ENCODE measurements at regions of chr17 and their contacts with region 1.

Region 1: DNA sequence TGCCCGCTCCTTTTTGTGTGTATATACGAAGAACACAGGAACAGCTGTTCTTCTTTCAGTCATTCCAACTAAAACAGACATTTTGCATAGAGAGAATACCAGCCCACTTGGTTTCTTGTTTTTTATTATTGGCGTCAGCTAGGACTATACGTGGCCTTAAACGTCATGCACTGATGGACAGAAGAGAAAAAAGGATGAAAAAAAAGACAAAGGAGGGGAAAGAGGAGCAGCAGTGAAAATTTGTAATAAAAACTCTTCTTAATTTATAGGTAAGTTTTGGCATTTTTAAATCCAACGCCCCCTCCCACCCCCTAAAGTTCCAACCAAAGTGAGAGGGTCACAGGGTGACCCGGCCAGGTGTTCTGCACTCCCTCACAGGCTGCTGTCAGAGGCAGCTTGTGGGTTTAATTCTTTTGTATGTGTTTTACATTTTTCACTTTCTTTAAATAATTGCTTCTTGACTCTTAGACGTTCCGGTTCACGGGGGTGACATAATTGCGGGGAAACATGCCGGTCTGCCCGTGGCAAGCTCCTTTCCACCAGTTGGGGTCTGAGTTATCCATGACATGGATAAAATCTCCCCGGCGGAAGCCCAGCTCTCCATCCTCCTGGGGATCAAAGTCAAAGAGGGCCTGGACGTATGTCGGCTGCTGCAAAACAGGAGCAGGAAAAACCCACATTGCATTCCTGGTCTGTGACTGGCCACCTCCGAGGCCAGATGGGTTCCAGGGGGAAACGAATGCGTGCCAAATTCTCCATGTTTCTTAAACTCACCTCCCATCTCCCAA is 30.9 kb upstream of the SLC25A19 start:
- DNase-seq: no peak
- H3K4me3 ChIP-seq: no peak overlapping the region
- H3K27ac ChIP-seq: no peak overlapping the region
- H3K4me1 ChIP-seq: peaks cover 0 to 5% (median 0%) of the 10 kb centered on the region in 4 donors
- H3K27me3 ChIP-seq: no peaks in the 10 kb centered on the region
- CTCF ChIP-seq: no peak

Region 2: DNA sequence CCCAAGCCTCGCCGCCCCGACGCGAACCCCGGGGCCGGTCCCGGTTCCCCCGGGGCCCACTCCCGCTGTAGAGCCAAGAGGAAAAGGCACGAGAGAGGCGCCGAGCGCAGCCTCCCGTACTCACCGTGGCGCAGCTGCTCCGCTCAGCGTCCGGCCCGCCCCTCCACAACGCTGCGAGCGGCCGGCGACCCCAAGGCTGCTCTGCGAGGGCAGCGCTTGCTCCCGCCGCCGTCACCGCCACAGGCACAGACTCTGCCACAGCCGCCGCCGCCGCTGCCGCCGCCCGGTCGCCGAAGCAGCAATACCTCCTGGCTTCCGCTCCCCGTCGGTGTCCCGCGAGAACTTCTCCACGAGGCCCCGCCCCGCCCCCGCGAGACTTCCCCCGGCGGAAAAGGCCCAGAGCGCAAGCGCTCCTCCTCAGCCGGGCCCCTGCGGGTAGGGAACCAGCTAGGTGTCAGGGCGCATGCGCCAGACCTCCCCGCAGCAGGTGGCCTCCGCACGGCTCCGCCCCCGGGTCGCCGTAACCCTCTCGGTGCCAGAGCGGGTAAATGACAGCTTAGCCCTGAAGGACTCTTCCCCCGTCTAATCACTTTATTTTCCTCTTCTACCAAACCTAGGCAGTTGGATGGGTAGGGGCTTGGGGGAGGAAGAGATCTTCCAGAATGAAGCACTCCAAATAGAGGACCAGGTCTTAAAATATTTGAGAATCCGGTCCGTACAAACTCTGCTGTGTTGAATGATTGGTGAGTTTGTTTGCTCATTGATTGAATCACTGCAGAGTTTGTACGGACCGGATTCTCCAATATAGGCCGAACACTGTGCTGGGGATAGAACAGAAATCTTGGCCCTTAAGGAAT is 85.5 kb after region 1 on chr17 and contains the start of gene GRB2:
- intact Hi-C with region 1: loop called (anchors 2 kb)
- DNase-seq: peak; percentile 97 to 99
- H3K4me3 ChIP-seq: peak within 1 kb of the TSS; percentile 73 to 100
- H3K27ac ChIP-seq: peak within 1 kb of the TSS; percentile 87 to 96
- H3K4me1 ChIP-seq: peaks cover 0 to 36% (median 26%) of the 10 kb centered on the region in 4 donors
- H3K27me3 ChIP-seq: no peaks in the 10 kb centered on the region
- CTCF ChIP-seq: peak in 1 of 2 experiments; percentile 8

Region 3: DNA sequence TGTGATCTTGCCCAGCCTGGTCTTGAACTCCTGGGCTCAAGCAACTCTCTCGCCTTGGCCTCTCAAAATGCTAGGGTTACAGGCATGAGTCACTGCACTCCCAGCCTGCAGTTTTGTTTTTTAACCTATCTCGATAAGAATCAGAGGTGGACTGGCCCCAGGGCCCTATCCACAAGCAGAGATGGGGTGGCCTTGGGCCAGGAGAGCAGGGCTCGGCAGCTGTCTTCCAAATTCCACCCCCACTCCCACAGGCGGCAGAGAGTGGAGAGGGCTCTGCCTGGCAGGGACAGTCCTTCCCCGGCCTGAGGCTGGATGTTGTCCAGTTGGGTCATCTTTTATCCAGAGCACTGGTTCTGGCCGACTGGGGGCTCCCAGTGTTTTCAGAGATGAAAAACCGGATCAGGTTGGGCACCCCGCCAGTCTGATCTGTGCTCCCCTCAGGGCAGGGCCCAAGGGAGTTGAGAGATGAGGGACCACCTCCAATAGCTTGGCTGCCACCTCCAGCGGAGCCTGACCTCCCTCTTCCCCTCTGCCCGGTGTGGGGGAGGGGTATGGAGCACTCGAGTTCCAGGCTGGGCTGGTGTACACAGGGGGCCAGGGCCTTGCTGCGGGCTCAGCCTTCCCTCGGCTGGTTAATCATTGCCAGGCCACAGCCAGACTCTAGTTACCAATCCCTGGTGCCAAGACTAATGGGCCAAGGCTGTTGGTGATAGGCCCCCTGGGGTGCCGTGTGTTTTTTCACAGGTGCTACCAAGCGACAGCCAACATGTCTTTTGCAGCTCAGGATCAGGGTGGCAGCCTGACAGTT is 237.2 kb after region 1 on chr17:
- intact Hi-C with region 1: no loop called
- DNase-seq: no peak
- H3K4me3 ChIP-seq: no peak overlapping the region
- H3K27ac ChIP-seq: no peak overlapping the region
- H3K4me1 ChIP-seq: peaks cover 0 to 36% (median 11%) of the 10 kb centered on the region in 4 donors
- H3K27me3 ChIP-seq: no peaks in the 10 kb centered on the region
- CTCF ChIP-seq: no peak